CD4-positive, alpha-beta T cell (primary cell): ENCODE measurements at regions of chr13 and their contacts with region 1.

Region 1: GRCh38 chr13:77267362-77267761 is 59.5 kb downstream of the MYCBP2 start:
- DNase-seq: no peak
- ATAC-seq: no peak
- H3K4me3 ChIP-seq: no peak overlapping the region
- H3K4me3 Mint-ChIP-seq: no peak overlapping the region
- H3K27ac ChIP-seq: no peak overlapping the region
- H3K27ac Mint-ChIP-seq: no peak overlapping the region
- H3K4me1 ChIP-seq: no peaks in the 10 kb centered on the region
- H3K4me1 Mint-ChIP-seq: peaks cover 5% of the 10 kb centered on the region
- H3K27me3 ChIP-seq: no peaks in the 10 kb centered on the region
- H3K27me3 Mint-ChIP-seq: no peaks in the 10 kb centered on the region
- CTCF ChIP-seq: no peak

Region 2: DNA sequence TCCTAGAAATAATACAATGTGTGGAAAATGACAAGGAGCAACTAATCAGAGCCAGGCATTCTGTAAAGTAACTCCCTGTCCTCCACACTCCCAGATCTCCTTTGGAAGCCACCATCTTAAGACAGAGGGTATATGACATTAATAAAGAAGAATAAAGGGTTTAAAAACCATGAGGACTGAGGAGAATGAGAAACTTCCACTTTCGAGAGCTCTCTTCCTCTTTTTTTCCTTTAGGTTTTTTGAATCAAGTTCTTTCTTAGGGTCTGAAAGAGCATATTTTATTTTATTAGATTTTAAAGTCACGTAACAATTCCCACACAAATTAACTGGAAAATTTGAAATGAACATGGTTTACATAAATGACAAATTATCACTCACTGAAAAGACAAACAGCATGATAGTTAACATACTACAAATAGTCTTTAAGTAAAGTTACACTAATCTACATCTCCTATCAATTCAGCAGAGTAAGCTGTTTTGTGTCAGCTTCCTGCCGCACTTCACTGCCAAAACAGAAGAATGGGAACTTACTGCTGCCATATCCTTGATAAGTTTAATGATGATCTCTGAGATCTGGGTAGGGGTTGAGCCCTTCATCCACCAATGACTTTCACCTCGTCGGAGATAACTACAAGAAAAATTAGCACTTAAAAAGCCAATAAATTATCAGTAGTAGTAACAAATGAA is 201.8 kb before region 1 on chr13:
- CTCF ChIA-PET with region 1: no interaction called
- POLR2A ChIA-PET with region 1: no interaction called
- intact Hi-C with region 1: loop called in 1 of 2 experiments (anchors 10 kb)
- DNase-seq: no peak
- ATAC-seq: no peak
- H3K4me3 ChIP-seq: no peak overlapping the region
- H3K4me3 Mint-ChIP-seq: no peak overlapping the region
- H3K27ac ChIP-seq: no peak overlapping the region
- H3K27ac Mint-ChIP-seq: peak overlapping the region; percentile 27
- H3K4me1 ChIP-seq: no peaks in the 10 kb centered on the region
- H3K4me1 Mint-ChIP-seq: no peaks in the 10 kb centered on the region
- H3K27me3 ChIP-seq: no peaks in the 10 kb centered on the region
- H3K27me3 Mint-ChIP-seq: no peaks in the 10 kb centered on the region
- CTCF ChIP-seq: no peak

Region 3: DNA sequence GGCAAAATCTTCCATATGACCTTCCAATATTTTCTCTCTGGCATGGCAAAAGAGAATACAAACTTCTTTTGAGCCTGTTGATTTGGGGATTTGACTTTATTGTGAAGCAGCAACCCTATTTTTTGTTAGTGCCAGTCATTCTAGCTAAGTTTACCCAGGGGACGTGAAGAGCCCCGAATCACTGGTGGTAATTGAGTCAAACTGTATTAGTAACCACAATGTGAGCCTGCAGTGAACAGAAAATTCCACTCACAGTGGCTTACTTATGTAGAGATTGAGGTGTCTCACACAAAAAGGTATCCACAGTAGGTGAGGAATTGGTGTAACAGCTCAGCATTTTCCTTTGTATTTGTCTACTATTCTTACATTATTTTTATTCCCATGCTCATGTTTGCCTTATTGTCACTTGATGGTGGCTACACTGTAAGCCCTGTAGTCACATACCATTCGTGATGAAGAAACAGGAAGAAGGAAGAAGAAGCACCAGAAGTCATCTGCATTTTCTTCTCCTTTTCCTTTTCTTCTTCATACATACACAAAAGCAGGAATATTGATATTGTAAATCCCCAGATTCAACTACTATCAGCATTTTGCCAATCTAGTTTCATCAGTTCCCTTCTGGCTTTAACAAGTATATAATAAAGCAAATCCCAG is 92.8 kb after region 1 on chr13:
- CTCF ChIA-PET with region 1: no interaction called
- POLR2A ChIA-PET with region 1: no interaction called
- intact Hi-C with region 1: no loop called
- DNase-seq: no peak
- ATAC-seq: no peak
- H3K4me3 ChIP-seq: no peak overlapping the region
- H3K4me3 Mint-ChIP-seq: no peak overlapping the region
- H3K27ac ChIP-seq: no peak overlapping the region
- H3K27ac Mint-ChIP-seq: no peak overlapping the region
- H3K4me1 ChIP-seq: no peaks in the 10 kb centered on the region
- H3K4me1 Mint-ChIP-seq: no peaks in the 10 kb centered on the region
- H3K27me3 ChIP-seq: no peaks in the 10 kb centered on the region
- H3K27me3 Mint-ChIP-seq: no peaks in the 10 kb centered on the region
- CTCF ChIP-seq: no peak